AG04449 (cell line): ENCODE measurements at regions of chr17 and their contacts with region 1.

Region 1: GRCh38 chr17:78497115-78497540 is 80.1 kb downstream of the DNAH17 start:
- DNase-seq: peak; percentile 12
- H3K4me3 ChIP-seq: no peak overlapping the region
- CTCF ChIP-seq: peak; percentile 87

Region 2: GRCh38 chr17:78484300-78485246 is 12.6 kb before region 1 on chr17:
- CTCF ChIA-PET with region 1: interaction called, 18 read pairs
- POLR2A ChIA-PET with region 1: no interaction called
- DNase-seq: no peak
- H3K4me3 ChIP-seq: peak overlapping the region; percentile 33
- CTCF ChIP-seq: no peak

Region 3: DNA sequence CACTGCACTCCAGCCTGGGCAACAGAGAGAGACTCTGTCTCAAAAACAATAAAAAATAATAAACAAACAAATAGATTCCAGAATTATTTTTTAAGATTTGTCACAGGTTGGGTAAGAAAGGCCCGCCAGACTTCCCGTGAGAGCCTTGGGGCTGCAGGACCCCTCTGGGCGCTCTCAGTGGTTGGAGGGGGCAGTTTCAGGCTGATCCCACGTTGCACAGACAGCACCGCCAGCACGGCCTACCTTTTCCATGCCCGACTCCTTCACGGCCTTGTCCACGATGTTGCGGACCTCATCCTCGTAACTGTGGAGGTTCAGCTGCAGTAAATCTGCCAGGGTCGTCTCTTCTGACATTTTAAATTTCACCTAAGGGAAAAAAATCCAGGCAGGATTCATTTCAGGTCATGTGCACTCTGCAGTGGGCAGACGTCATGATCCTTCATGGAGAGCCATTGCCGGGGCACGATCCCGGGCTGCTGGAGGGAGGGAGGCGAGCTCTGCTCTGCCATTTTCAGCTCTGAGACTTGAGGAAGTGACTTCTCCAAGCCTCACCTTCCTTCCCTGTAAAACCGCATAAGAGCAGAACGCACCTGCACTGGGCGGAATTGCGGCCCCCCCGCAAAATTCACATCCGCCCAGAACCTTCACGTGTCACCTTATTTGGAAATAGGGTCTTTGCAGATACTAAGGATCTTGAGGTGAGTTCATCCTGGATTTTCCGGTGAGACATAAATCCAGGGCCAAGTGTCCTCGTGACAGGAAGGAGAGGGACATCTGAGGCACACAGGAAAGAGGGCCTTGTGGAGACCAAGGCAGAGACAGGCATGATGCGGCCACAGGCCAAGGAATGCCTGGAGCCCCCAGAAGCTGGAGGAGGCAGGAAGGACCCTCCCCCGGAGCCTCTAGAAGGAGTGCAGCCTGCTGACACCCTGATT is 13.3 kb after region 1 on chr17:
- CTCF ChIA-PET with region 1: interaction called, 11 read pairs
- POLR2A ChIA-PET with region 1: no interaction called
- DNase-seq: no peak
- H3K4me3 ChIP-seq: no peak overlapping the region
- CTCF ChIP-seq: no peak

Region 4: GRCh38 chr17:78528541-78528940 is 31.4 kb after region 1 on chr17:
- CTCF ChIA-PET with region 1: no interaction called
- POLR2A ChIA-PET with region 1: no interaction called
- DNase-seq: no peak
- H3K4me3 ChIP-seq: no peak overlapping the region
- CTCF ChIP-seq: no peak

Region 5: GRCh38 chr17:78745407-78746088 is 248.4 kb after region 1 on chr17:
- CTCF ChIA-PET with region 1: interaction called, 27 read pairs
- POLR2A ChIA-PET with region 1: no interaction called
- DNase-seq: no peak
- H3K4me3 ChIP-seq: no peak overlapping the region
- CTCF ChIP-seq: peak; percentile 42

Region 6: GRCh38 chr17:78798695-78799559 is 301.8 kb after region 1 on chr17:
- CTCF ChIA-PET with region 1: interaction called, 14 read pairs
- POLR2A ChIA-PET with region 1: no interaction called
- DNase-seq: no peak
- H3K4me3 ChIP-seq: no peak overlapping the region
- CTCF ChIP-seq: peak; percentile 42

Region 7: DNA sequence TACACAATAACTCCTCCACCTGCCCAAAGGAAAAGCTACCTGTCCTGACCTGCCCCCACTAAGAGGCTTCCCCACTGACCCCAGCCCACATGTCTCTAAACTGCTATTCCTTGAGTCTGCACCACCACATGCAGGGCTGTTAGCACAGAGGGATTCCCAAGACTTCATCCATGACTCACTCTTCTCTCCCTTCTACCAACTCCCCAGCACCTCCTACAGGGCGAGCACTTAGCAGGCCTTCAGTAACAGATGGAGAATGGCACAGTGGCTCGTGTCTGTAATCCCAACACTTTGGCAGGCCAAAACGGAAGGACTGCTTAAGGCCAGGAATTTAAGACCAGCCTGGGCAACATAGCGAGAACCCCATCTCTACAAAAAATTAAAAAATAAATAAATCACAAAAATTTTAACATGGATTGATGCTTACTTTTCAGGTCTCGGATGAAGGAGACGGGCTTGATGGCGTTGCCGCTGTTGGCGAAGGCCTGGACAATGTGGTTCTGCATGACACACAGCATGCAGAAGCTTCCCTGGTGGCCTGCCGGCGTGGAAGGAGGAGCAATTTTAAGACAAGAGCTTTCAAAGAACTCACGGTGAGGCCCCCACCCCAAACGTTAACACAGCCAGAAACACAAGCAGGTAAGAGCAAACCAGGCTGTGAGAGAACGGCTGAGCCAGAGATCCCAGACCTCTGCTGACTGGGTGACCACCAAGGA is 331.5 kb after region 1 on chr17:
- CTCF ChIA-PET with region 1: interaction called, 11 read pairs
- POLR2A ChIA-PET with region 1: no interaction called
- DNase-seq: no peak
- H3K4me3 ChIP-seq: no peak overlapping the region
- CTCF ChIP-seq: peak; percentile 58